ENCODE measurements at regions of chr10 and their contacts with region 1.

Region 1: GRCh38 chr10:43648398-43649184 is at the start of gene ZNF32:
- DNase-seq: peak; percentile 79
- ATAC-seq: peak; percentile 98
- H3K4me3 Mint-ChIP-seq: peak within 1 kb of the TSS; percentile 94
- H3K27ac Mint-ChIP-seq: peak within 1 kb of the TSS; percentile 77
- H3K4me1 Mint-ChIP-seq: peaks cover 20% of the 10 kb centered on the region
- H3K27me3 Mint-ChIP-seq: peaks cover 4% of the 10 kb centered on the region
- CTCF ChIP-seq: no peak
- total RNA-seq, gene ZNF32: 26.7 and 30.1 TPM in 2 replicates

Region 2: GRCh38 chr10:42552493-42553407 is 1095.8 kb before region 1 on chr10:
- CTCF ChIA-PET with region 1: no interaction called
- POLR2A ChIA-PET with region 1: no interaction called
- intact Hi-C with region 1: loop called (anchors 1 kb)
- DNase-seq: peak; percentile 85
- ATAC-seq: peak; percentile 97
- H3K4me3 Mint-ChIP-seq: peak overlapping the region; percentile 96
- H3K27ac Mint-ChIP-seq: peak overlapping the region; percentile 89
- H3K4me1 Mint-ChIP-seq: peaks cover 35% of the 10 kb centered on the region
- H3K27me3 Mint-ChIP-seq: no peaks in the 10 kb centered on the region
- CTCF ChIP-seq: no peak

Region 3: GRCh38 chr10:42782446-42783180 is 866.0 kb before region 1 on chr10 and contains the start of gene BMS1:
- CTCF ChIA-PET with region 1: no interaction called
- POLR2A ChIA-PET with region 1: no interaction called
- intact Hi-C with region 1: loop called (anchors 1 kb)
- DNase-seq: peak; percentile 84
- ATAC-seq: peak; percentile 88
- H3K4me3 Mint-ChIP-seq: peak within 1 kb of the TSS; percentile 98
- H3K27ac Mint-ChIP-seq: peak within 1 kb of the TSS; percentile 89
- H3K4me1 Mint-ChIP-seq: peaks cover 21% of the 10 kb centered on the region
- H3K27me3 Mint-ChIP-seq: peaks cover 7% of the 10 kb centered on the region
- CTCF ChIP-seq: no peak
- total RNA-seq, gene BMS1: 24.6 and 25.1 TPM in 2 replicates

Region 4: GRCh38 chr10:43574001-43574892 is 74.3 kb before region 1 on chr10 and contains the start of gene ZNF239:
- CTCF ChIA-PET with region 1: no interaction called
- POLR2A ChIA-PET with region 1: interaction called, 11 read pairs
- intact Hi-C with region 1: loop called (anchors 1 kb)
- DNase-seq: peak; percentile 74
- ATAC-seq: peak; percentile 95
- H3K4me3 Mint-ChIP-seq: peak within 1 kb of the TSS; percentile 89
- H3K27ac Mint-ChIP-seq: peak within 1 kb of the TSS; percentile 83
- H3K4me1 Mint-ChIP-seq: peaks cover 48% of the 10 kb centered on the region
- H3K27me3 Mint-ChIP-seq: no peaks in the 10 kb centered on the region
- CTCF ChIP-seq: no peak
- total RNA-seq, gene ZNF239: 5.7 and 9.4 TPM in 2 replicates

Region 5: GRCh38 chr10:43606322-43607198 is 42.0 kb before region 1 on chr10 and contains the start of gene ZNF485:
- CTCF ChIA-PET with region 1: no interaction called
- POLR2A ChIA-PET with region 1: interaction called, 6 read pairs
- intact Hi-C with region 1: loop called (anchors 1 kb)
- DNase-seq: peak; percentile 66
- ATAC-seq: peak; percentile 95
- H3K4me3 Mint-ChIP-seq: peak within 1 kb of the TSS; percentile 84
- H3K27ac Mint-ChIP-seq: peak within 1 kb of the TSS; percentile 43
- H3K4me1 Mint-ChIP-seq: peaks cover 20% of the 10 kb centered on the region
- H3K27me3 Mint-ChIP-seq: no peaks in the 10 kb centered on the region
- CTCF ChIP-seq: no peak
- total RNA-seq, gene ZNF485: 7.6 and 9.0 TPM in 2 replicates

Region 6: GRCh38 chr10:43698156-43698555 is 49.6 kb after region 1 on chr10:
- CTCF ChIA-PET with region 1: no interaction called
- POLR2A ChIA-PET with region 1: no interaction called
- intact Hi-C with region 1: no loop called
- DNase-seq: no peak
- ATAC-seq: no peak
- H3K4me3 Mint-ChIP-seq: no peak overlapping the region
- H3K27ac Mint-ChIP-seq: no peak overlapping the region
- H3K4me1 Mint-ChIP-seq: no peaks in the 10 kb centered on the region
- H3K27me3 Mint-ChIP-seq: peaks cover 3% of the 10 kb centered on the region
- CTCF ChIP-seq: no peak

Region 7: DNA sequence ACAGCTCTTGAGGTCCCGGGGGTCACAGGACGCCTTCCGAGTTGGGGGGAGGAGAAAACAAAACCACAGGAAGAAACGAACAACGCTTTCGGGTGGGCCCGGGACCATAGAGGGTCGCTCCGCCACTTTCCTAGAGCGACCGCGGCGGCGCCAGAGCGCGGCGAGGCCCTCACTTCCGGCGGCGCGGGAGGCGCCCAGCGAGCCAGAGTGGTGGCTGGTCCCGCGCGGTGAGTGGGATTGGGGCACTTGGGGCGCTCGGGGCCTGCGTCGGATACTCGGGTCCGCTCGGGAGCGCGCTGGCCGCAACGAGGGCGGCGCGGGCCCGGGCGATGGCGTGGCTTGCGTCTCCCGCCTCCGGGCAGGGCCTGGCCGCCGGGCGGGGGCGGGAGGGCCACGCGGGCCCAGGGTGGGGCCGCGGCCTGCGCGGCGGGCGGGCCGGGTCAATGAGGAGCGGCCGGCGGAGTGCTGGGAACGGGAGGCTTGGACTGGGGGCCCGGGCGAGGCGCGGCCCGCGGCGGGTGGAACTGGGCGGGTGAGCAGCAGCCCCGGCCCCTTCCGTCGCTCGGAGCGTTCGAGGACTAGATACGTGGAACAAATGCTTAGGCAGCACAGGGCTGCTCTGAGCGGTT is 1352.3 kb after region 1 on chr10 and contains the start of gene ZNF22:
- CTCF ChIA-PET with region 1: no interaction called
- POLR2A ChIA-PET with region 1: no interaction called
- intact Hi-C with region 1: loop called (anchors 2 kb)
- DNase-seq: peak; percentile 76
- ATAC-seq: peak; percentile 82
- H3K4me3 Mint-ChIP-seq: peak within 1 kb of the TSS; percentile 90
- H3K27ac Mint-ChIP-seq: peak within 1 kb of the TSS; percentile 93
- H3K4me1 Mint-ChIP-seq: peaks cover 25% of the 10 kb centered on the region
- H3K27me3 Mint-ChIP-seq: no peaks in the 10 kb centered on the region
- CTCF ChIP-seq: no peak
- total RNA-seq, gene ZNF22: 34.2 and 37.5 TPM in 2 replicates